A673 (cell line): ENCODE measurements at regions of chr3 and their contacts with region 1.

Region 1: DNA sequence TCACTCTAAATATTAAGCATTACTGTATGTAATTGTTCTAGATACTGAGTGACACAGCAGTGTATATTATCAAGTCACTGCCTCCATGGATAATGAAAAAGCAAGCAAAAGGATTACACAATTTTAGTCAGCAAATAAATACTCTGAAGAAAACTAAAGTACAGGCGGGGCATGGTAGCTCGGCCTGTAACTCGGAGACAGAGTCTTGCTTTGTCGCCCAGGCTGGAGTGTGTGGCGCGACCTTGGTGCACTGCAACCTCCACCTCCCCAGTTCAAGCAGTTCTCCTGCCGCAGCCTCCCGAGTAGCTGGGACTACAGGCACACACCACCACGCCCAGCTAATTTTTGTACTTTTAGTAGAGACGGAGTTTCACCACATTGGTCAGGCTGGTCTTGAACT is 32.7 kb downstream of the RBM6 start:
- DNase-seq: no peak
- H3K4me3 ChIP-seq: no peak overlapping the region
- H3K27ac ChIP-seq: no peak overlapping the region
- H3K4me1 ChIP-seq: no peaks in the 10 kb centered on the region
- H3K27me3 ChIP-seq: no peaks in the 10 kb centered on the region
- CTCF ChIP-seq: no peak

Region 2: DNA sequence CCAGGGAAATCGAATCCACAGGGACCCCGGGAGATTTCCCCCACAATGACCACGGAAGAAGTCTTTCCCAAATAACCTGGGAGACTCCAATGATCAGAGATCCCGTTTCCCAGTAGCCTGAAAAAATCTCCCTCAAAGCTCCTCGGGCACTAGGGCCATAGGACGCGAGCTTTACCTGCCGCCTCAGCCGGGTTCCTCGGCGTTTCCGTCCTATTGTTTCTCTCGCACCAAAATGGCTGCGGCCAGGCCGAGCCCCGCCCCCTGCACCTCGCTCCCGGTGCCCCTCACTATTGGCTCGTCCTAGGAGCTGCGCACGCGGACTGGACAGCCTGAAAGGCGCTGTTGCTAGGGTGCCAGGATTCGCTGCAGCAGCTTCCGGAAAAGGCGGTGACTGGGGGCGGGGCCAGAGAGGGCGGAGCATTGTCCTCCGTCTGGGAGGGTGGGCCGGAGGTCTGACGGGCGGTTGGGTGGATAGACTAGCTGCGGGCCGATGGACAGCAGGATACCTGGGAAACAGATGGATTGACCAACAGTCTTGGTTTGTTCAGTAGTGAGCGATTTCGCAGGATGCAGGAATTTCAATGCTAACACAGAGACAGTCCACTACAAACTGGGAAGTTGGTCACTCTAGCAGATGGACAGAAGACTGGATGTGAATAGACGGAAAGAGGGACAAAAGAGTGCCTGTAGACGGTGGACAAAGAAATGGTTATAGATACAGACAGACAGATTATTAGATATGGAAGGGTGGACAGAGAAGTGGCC is 1255.5 kb before region 1 on chr3 and contains the start of gene IP6K2:
- CTCF ChIA-PET with region 1: no interaction called
- POLR2A ChIA-PET with region 1: no interaction called
- intact Hi-C with region 1: no loop called
- DNase-seq: peak; percentile 95
- H3K4me3 ChIP-seq: peak within 1 kb of the TSS; percentile 65
- H3K27ac ChIP-seq: peak within 1 kb of the TSS; percentile 86
- H3K4me1 ChIP-seq: no peaks in the 10 kb centered on the region
- H3K27me3 ChIP-seq: no peaks in the 10 kb centered on the region
- CTCF ChIP-seq: no peak
- total RNA-seq, gene IP6K2: 62.5 and 72.0 TPM in 2 replicates

Region 3: GRCh38 chr3:48945891-48946549 is 1026.6 kb before region 1 on chr3:
- CTCF ChIA-PET with region 1: no interaction called
- POLR2A ChIA-PET with region 1: no interaction called
- intact Hi-C with region 1: no loop called
- DNase-seq: no peak
- H3K4me3 ChIP-seq: no peak overlapping the region
- H3K27ac ChIP-seq: no peak overlapping the region
- H3K4me1 ChIP-seq: no peaks in the 10 kb centered on the region
- H3K27me3 ChIP-seq: no peaks in the 10 kb centered on the region
- CTCF ChIP-seq: no peak

Region 4: GRCh38 chr3:49671291-49672288 is 301.1 kb before region 1 on chr3:
- CTCF ChIA-PET with region 1: interaction called, 13 read pairs
- POLR2A ChIA-PET with region 1: no interaction called
- intact Hi-C with region 1: no loop called
- DNase-seq: peak; percentile 43
- H3K4me3 ChIP-seq: no peak overlapping the region
- H3K27ac ChIP-seq: no peak overlapping the region
- H3K4me1 ChIP-seq: no peaks in the 10 kb centered on the region
- H3K27me3 ChIP-seq: no peaks in the 10 kb centered on the region
- CTCF ChIP-seq: peak; percentile 66

Region 5: DNA sequence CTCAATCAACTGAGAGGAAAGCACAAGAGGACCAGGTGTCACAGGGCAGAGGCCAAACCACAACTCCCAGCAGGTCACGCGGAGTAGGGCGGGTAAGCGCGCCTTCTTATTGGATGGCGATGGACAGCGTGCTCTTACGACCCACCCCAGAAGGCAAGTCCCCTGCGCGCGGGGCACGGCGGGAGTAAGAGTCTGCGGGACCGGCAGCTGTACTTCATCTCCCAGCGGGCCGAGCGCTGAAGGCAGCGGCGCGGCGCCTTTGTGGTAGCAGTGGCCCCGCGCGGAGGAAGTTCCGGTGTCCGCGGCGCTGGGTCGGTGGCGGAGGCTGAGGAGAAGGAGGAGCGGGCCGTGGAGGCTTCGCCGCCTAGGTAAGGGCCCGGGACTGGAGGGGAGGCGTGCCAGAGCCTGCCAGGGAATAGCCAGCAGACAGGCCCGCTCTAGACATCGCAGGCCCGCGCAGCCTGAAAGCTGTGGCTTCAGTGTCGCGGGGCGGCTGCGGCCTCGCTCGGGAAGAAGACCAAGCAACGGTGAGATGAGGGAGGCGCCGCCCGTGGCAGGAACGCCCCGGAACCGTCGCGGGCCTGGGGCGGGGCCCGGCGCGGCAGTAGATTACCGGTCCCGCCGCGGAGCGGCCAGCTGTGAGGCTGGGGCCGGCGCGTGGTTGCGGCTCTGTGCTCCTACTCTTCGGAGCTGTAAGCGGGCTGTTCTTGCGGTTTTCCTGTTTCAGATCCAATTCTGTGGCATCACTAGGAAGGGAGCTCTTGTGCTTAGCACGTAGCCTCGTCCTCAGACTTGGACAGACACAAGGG is 32.6 kb before region 1 on chr3 and contains the start of gene RBM6:
- CTCF ChIA-PET with region 1: no interaction called
- POLR2A ChIA-PET with region 1: no interaction called
- intact Hi-C with region 1: no loop called
- DNase-seq: peak; percentile 95
- H3K4me3 ChIP-seq: peak within 1 kb of the TSS; percentile 76
- H3K27ac ChIP-seq: peak within 1 kb of the TSS; percentile 87
- H3K4me1 ChIP-seq: no peaks in the 10 kb centered on the region
- H3K27me3 ChIP-seq: no peaks in the 10 kb centered on the region
- CTCF ChIP-seq: no peak
- total RNA-seq, gene RBM6: 55.9 and 64.3 TPM in 2 replicates